PC-9 (cell line): ENCODE measurements at regions of chr2 and their contacts with region 1.

Region 1: GRCh38 chr2:152600698-152601097 is 116.6 kb downstream of the PRPF40A start:
- DNase-seq: peak in 1 of 2 experiments; percentile 32
- H3K4me3 ChIP-seq: no peak overlapping the region
- H3K27ac ChIP-seq: no peak overlapping the region
- H3K4me1 ChIP-seq: no peaks in the 10 kb centered on the region
- H3K27me3 ChIP-seq: no peaks in the 10 kb centered on the region
- CTCF ChIP-seq: no peak

Region 2: GRCh38 chr2:152363936-152364335 is 236.8 kb before region 1 on chr2:
- CTCF ChIA-PET with region 1: no interaction called
- POLR2A ChIA-PET with region 1: interaction called, 12 read pairs
- intact Hi-C with region 1: no loop called
- DNase-seq: no peak
- H3K4me3 ChIP-seq: no peak overlapping the region
- H3K27ac ChIP-seq: no peak overlapping the region
- H3K4me1 ChIP-seq: no peaks in the 10 kb centered on the region
- H3K27me3 ChIP-seq: no peaks in the 10 kb centered on the region
- CTCF ChIP-seq: no peak